OCI-LY7 (cell line): ENCODE measurements at regions of chr6 and their contacts with region 1.

Region 1: DNA sequence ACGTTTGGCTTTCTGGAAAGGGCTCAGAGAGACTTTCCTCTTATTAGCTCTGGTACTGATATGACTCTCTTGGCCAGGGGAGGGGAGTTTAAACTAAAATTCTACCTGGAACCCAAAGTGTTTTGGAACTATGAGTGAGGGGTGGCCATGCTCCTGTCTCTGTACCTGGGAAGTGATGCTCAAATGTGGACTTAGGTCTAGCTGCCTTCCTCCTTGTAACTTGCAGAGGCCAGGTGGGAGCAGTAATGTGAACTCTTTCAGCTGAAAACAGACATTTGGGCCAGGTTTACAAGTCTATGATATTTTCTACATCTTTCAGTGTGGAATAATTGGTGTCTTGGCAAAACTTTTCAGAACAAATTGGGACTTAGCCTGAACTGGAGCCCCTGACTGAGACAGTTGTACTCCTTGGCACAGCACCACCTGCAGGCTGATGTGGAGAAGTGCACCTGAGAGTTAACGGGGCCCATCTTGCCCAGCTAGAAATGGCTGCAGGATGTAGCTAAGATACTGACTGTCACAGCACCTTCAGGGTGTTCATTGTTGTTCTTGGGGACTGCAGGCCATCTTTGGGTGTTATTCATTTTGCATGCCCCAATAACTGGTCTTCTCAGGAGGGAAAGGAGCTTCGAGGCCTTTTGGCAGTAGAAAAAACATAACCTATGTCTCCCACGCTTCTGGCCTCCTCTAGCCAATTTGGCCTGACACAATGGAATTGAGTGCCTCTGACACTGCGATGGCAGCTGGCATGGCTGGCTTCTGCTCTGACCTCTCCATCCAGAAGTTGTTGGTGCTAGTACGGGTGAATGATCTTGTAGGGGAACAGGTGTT is 37.1 kb downstream of the CD109 start:
- DNase-seq: peak; percentile 70
- H3K4me3 ChIP-seq: no peak overlapping the region
- H3K27ac ChIP-seq: no peak overlapping the region
- H3K4me1 ChIP-seq: no peaks in the 10 kb centered on the region
- CTCF ChIP-seq: peak; percentile 94

Region 2: DNA sequence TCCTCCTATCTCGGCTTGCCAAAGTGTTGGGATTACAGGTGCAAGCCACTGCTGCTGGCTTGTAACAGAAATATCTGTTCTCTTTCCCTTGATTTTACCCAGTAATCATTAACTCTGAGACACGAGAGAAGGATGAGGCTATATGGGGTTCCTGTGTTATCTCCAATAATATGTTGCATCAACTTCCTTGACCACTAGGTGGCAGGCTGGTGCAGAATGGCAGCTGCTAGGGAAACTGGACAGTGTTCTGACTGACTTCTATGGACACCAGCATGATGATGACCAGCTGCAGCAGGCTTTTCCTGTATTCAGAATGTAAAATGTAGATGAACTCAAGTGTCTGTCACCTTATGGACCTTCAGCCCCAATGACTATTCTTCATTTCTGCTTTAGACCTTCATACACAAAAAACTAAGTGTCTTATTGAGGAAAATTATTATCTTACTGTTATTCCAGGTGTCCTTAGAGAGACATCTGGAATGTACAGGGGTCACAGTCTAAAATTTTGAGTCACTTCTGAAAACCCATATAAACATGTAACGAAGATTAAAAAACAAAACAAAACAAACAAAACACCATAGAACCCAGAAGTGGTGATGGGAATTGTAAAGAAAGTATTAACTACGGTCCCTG is 57.5 kb before region 1 on chr6:
- CTCF ChIA-PET with region 1: interaction called, 5 read pairs
- POLR2A ChIA-PET with region 1: no interaction called
- intact Hi-C with region 1: loop called (anchors 2 kb)
- DNase-seq: peak; percentile 66
- H3K4me3 ChIP-seq: no peak overlapping the region
- H3K27ac ChIP-seq: no peak overlapping the region
- H3K4me1 ChIP-seq: no peaks in the 10 kb centered on the region
- CTCF ChIP-seq: peak; percentile 95